Activated B cell treated with CpG ODN at 0.5 μM for 24 hours (primary cell): ENCODE measurements at regions of chr17 and their contacts with region 1.

Region 1: GRCh38 chr17:75012346-75013091 is at the start of gene MRPL58:
- DNase-seq: peak; percentile 78
- ATAC-seq: peak; percentile 95
- H3K4me3 Mint-ChIP-seq: peak within 1 kb of the TSS; percentile 97
- H3K27ac Mint-ChIP-seq: peak within 1 kb of the TSS; percentile 89
- H3K4me1 Mint-ChIP-seq: peaks cover 29% of the 10 kb centered on the region
- H3K27me3 Mint-ChIP-seq: no peaks in the 10 kb centered on the region
- CTCF ChIP-seq: no peak
- total RNA-seq, gene MRPL58: 28.4 and 31.8 TPM in 2 replicates

Region 2: DNA sequence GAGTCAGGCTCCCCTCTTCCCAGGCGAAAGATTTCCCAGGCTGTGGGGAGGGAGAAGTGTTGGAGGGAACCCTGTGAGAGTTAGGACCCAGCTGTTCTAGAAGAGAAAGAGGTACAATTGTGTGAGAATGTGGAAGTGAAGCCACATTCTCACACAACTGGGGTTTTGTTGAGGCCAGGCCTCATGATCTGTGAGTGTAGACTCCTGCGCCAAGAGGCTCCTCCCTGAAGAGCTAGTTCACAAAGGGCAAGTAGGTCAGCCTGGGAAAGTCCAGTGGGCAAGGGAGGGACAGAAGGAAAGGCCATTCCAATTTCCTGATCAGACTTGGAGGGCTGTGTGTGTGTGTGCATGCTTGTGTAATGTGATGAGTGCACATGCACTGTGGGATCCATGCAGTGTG is 315.0 kb before region 1 on chr17:
- CTCF ChIA-PET with region 1: no interaction called
- POLR2A ChIA-PET with region 1: no interaction called
- intact Hi-C with region 1: no loop called
- DNase-seq: no peak
- ATAC-seq: no peak
- H3K4me3 Mint-ChIP-seq: no peak overlapping the region
- H3K27ac Mint-ChIP-seq: no peak overlapping the region
- H3K4me1 Mint-ChIP-seq: no peaks in the 10 kb centered on the region
- H3K27me3 Mint-ChIP-seq: peaks cover 14% of the 10 kb centered on the region
- CTCF ChIP-seq: no peak

Region 3: GRCh38 chr17:74972107-74972972 is 40.2 kb before region 1 on chr17 and contains the start of gene HID1:
- CTCF ChIA-PET with region 1: no interaction called
- POLR2A ChIA-PET with region 1: interaction called, 24 read pairs
- intact Hi-C with region 1: no loop called
- DNase-seq: peak; percentile 69
- ATAC-seq: peak; percentile 92
- H3K4me3 Mint-ChIP-seq: peak within 1 kb of the TSS; percentile 76
- H3K27ac Mint-ChIP-seq: peak within 1 kb of the TSS; percentile 2
- H3K4me1 Mint-ChIP-seq: peaks cover 6% of the 10 kb centered on the region
- H3K27me3 Mint-ChIP-seq: peaks cover 19% of the 10 kb centered on the region
- CTCF ChIP-seq: no peak
- total RNA-seq, gene HID1: 1.5 and 2.1 TPM in 2 replicates

Region 4: DNA sequence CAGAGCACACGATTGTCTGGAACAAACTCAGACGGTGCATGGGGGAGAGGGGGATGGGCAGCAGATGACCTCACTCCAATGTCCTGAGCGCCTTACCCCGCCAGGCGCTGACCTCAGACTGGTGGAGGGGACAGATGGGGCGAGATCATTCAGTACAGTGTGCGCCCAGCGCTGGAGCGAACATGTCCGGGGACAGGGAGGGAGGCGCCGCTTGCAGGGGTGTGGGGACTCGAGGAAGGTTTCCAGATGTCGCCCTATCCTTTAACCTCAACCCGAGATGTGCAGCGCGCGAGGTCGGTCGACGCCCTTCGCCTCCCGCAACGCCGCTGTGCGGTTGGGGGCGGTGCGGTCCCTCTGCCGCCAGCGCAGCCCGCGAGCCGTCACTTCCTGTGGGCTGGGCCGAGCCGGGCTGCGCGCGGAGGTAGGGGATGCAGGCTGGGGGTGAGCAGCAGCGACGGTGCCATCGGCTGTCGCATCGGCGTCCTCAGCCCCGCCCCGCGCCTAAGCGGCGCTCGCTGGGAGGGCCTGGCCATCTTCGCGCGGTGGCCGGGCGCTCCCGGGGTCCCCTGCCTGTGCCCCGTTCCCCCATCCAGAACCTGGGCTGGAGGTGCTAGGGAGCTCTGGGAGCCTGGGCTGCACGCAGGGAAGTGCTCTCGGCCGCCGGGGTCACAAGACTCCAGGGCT is 30.4 kb before region 1 on chr17:
- CTCF ChIA-PET with region 1: interaction called, 7 read pairs
- POLR2A ChIA-PET with region 1: interaction called, 23 read pairs
- intact Hi-C with region 1: loop called (anchors 1 kb)
- DNase-seq: peak; percentile 64
- ATAC-seq: peak; percentile 96
- H3K4me3 Mint-ChIP-seq: peak overlapping the region; percentile 82
- H3K27ac Mint-ChIP-seq: peak overlapping the region; percentile 38
- H3K4me1 Mint-ChIP-seq: peaks cover 22% of the 10 kb centered on the region
- H3K27me3 Mint-ChIP-seq: peaks cover 12% of the 10 kb centered on the region
- CTCF ChIP-seq: no peak

Region 5: DNA sequence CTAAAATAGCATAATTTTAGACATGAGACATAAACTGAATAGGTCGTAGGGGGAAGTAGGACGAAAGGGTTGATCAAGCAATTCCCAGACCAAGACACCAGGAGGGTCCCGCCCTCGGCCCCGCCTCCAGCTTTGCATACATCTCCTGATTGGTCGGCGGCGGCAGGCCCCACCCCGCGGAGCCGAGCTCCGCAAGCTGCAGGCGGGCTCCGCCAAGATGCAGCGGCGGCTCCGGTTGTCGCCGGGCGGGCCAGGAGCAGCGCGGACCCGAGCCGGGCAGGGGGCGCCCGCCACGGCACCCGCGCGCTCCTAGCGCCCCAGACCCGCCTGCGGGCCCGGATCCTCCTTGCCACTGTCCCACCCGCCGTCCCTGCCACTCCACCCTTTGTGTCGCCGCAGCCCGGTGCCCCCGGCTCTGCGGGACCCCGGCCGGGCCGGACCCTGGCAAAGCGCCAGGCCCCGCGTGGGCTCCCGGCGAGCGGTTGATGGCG is 25.1 kb before region 1 on chr17 and contains the start of gene CDR2L:
- CTCF ChIA-PET with region 1: interaction called, 7 read pairs
- POLR2A ChIA-PET with region 1: interaction called, 23 read pairs
- intact Hi-C with region 1: loop called (anchors 1 kb)
- DNase-seq: peak; percentile 95
- ATAC-seq: peak; percentile 98
- H3K4me3 Mint-ChIP-seq: peak within 1 kb of the TSS; percentile 81
- H3K27ac Mint-ChIP-seq: peak within 1 kb of the TSS; percentile 64
- H3K4me1 Mint-ChIP-seq: peaks cover 12% of the 10 kb centered on the region
- H3K27me3 Mint-ChIP-seq: peaks cover 4% of the 10 kb centered on the region
- CTCF ChIP-seq: no peak
- total RNA-seq, gene CDR2L: not detected in 2 replicates

Region 6: GRCh38 chr17:75034236-75034908 is 21.9 kb after region 1 on chr17:
- CTCF ChIA-PET with region 1: interaction called, 6 read pairs
- POLR2A ChIA-PET with region 1: interaction called, 28 read pairs
- intact Hi-C with region 1: loop called (anchors 1 kb)
- DNase-seq: peak; percentile 76
- ATAC-seq: peak; percentile 72
- H3K4me3 Mint-ChIP-seq: peak overlapping the region; percentile 91
- H3K27ac Mint-ChIP-seq: peak overlapping the region; percentile 89
- H3K4me1 Mint-ChIP-seq: peaks cover 34% of the 10 kb centered on the region
- H3K27me3 Mint-ChIP-seq: peaks cover 1% of the 10 kb centered on the region
- CTCF ChIP-seq: no peak

Region 7: GRCh38 chr17:75046582-75047289 is 34.2 kb after region 1 on chr17 and contains the starts of genes ATP5PD and KCTD2:
- CTCF ChIA-PET with region 1: interaction called, 7 read pairs
- POLR2A ChIA-PET with region 1: interaction called, 21 read pairs
- intact Hi-C with region 1: loop called (anchors 1 kb)
- DNase-seq: peak; percentile 91
- ATAC-seq: peak; percentile 95
- H3K4me3 Mint-ChIP-seq: peak within 1 kb of the TSS; percentile 97
- H3K27ac Mint-ChIP-seq: peak within 1 kb of the TSS; percentile 86
- H3K4me1 Mint-ChIP-seq: peaks cover 37% of the 10 kb centered on the region
- H3K27me3 Mint-ChIP-seq: no peaks in the 10 kb centered on the region
- CTCF ChIP-seq: no peak
- total RNA-seq, gene ATP5PD: 158 and 181 TPM in 2 replicates
- total RNA-seq, gene KCTD2: 19.5 and 20.2 TPM in 2 replicates

Region 8: DNA sequence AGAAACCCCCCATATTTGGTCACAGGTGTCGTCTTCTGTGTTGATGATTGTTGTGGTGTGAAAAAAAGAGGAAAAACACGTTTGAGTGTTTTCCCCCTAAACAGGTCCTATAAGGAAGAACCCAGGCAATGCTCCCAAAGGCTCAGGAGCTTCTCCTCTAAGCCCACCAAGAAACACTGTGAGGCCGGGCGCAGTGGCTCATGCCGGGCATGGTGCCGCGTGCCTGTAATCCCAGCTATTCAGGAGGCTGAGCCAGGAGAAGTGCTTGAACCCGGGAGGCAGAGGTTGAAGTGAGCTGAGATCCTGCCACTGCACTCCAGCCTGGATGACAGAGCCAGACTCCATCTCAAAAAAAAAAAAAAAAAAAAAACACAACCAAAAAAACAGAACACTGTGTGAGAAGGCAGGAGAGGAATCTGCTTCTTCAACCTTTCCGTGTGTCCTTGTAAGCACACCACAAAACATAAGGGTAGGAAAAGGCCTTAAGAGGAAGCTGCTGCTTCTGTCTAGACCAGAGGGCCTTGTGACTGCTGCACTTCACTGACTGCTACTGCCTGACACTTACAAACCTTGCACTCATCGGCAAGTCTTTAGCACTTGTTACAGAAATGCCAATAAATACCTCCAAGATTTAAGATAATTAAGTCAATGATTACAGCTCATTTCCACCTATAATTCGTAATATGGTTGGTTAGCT is 132.4 kb after region 1 on chr17:
- CTCF ChIA-PET with region 1: no interaction called
- POLR2A ChIA-PET with region 1: no interaction called
- intact Hi-C with region 1: no loop called
- DNase-seq: no peak
- ATAC-seq: no peak
- H3K4me3 Mint-ChIP-seq: no peak overlapping the region
- H3K27ac Mint-ChIP-seq: no peak overlapping the region
- H3K4me1 Mint-ChIP-seq: peaks cover 29% of the 10 kb centered on the region
- H3K27me3 Mint-ChIP-seq: no peaks in the 10 kb centered on the region
- CTCF ChIP-seq: no peak

Region 9: GRCh38 chr17:75652915-75653549 is 640.5 kb after region 1 on chr17:
- CTCF ChIA-PET with region 1: no interaction called
- POLR2A ChIA-PET with region 1: no interaction called
- intact Hi-C with region 1: no loop called
- DNase-seq: no peak
- ATAC-seq: peak; percentile 99
- H3K4me3 Mint-ChIP-seq: no peak overlapping the region
- H3K27ac Mint-ChIP-seq: peak overlapping the region; percentile 72
- H3K4me1 Mint-ChIP-seq: peaks cover 7% of the 10 kb centered on the region
- H3K27me3 Mint-ChIP-seq: no peaks in the 10 kb centered on the region
- CTCF ChIP-seq: no peak